Dendritic cell treated with granulocyte-macrophage colony-stimulating factor and Interleukin-4, amounts not matched to agents 40 ng/mL and 50 ng/mL, for 4 days (primary cell): ENCODE measurements at regions of chr9 and their contacts with region 1.

Region 1: GRCh38 chr9:15552636-15553527 is at the start of gene CCDC171:
- H3K4me3 Mint-ChIP-seq: peak within 1 kb of the TSS; percentile 91
- H3K27ac Mint-ChIP-seq: peak within 1 kb of the TSS; percentile 87
- H3K4me1 Mint-ChIP-seq: peaks cover 22% of the 10 kb centered on the region
- H3K27me3 Mint-ChIP-seq: peaks cover 6% of the 10 kb centered on the region

Region 2: GRCh38 chr9:14693206-14693861 is 859.5 kb before region 1 on chr9 and contains the start of gene ZDHHC21:
- intact Hi-C with region 1: loop called (anchors 10 kb)
- H3K4me3 Mint-ChIP-seq: peak within 1 kb of the TSS; percentile 85
- H3K27ac Mint-ChIP-seq: peak within 1 kb of the TSS; percentile 71
- H3K4me1 Mint-ChIP-seq: peaks cover 12% of the 10 kb centered on the region
- H3K27me3 Mint-ChIP-seq: peaks cover 49% of the 10 kb centered on the region

Region 3: GRCh38 chr9:15306757-15307534 is 245.9 kb before region 1 on chr9 and contains the start of gene TTC39B:
- intact Hi-C with region 1: loop called (anchors 2 kb)
- H3K4me3 Mint-ChIP-seq: peak within 1 kb of the TSS; percentile 99
- H3K27ac Mint-ChIP-seq: peak within 1 kb of the TSS; percentile 92
- H3K4me1 Mint-ChIP-seq: peaks cover 32% of the 10 kb centered on the region
- H3K27me3 Mint-ChIP-seq: peaks cover 14% of the 10 kb centered on the region

Region 4: DNA sequence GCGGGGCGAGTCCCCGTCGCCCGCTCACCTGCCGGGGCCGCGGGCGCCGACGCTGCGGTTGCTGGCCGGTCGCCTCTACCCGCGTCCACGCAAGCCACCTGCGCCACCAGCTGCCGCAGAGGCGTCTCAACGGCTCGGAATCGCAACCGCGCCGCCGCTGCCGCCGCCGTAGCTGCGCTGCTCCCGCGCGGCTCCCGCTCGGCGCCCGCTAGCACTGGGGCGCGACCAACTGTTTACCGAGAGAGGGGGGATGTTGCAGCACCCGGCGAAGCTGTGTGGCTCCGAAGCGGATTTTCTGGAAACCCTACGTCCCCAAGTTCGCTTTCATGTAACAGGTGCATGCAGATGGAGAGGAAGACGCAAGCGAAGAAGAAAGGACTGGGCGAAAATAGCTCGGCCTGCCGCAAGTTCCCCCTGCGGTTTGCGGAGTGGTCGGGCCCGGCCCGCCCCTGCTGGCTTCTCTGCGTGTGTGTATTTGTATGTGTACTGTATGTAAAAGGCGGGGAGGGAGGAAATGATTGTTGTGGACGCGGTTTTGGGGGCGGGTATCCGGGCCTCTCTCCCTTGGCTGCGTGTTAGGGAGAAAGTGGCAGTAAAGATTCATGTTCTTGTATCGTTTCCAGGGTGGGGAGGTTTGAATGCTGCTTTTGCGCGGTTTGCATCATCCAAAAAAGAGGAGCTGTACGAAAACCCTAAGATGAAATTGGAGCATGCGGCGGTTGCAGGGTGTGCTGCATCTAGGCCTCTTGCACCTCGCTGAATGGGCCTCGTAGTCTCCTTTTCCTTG is 41.9 kb before region 1 on chr9 and contains the start of gene PSIP1:
- intact Hi-C with region 1: loop called (anchors 1 kb)
- H3K4me3 Mint-ChIP-seq: peak within 1 kb of the TSS; percentile 92
- H3K27ac Mint-ChIP-seq: peak within 1 kb of the TSS; percentile 99
- H3K4me1 Mint-ChIP-seq: peaks cover 47% of the 10 kb centered on the region
- H3K27me3 Mint-ChIP-seq: no peaks in the 10 kb centered on the region

Region 5: GRCh38 chr9:16653491-16654399 is 1100.9 kb after region 1 on chr9:
- intact Hi-C with region 1: no loop called
- H3K4me3 Mint-ChIP-seq: no peak overlapping the region
- H3K27ac Mint-ChIP-seq: no peak overlapping the region
- H3K4me1 Mint-ChIP-seq: no peaks in the 10 kb centered on the region
- H3K27me3 Mint-ChIP-seq: no peaks in the 10 kb centered on the region